ENCODE measurements at regions of chr20 and their contacts with region 1.

Region 1: GRCh38 chr20:57053798-57054552 is 212.5 kb downstream of the BMP7 start:
- DNase-seq: no peak
- H3K4me3 ChIP-seq: no peak overlapping the region
- H3K27ac ChIP-seq: no peak overlapping the region
- H3K4me1 ChIP-seq: no peaks in the 10 kb centered on the region
- H3K27me3 ChIP-seq: no peaks in the 10 kb centered on the region
- CTCF ChIP-seq: no peak
- EP300 ChIP-seq: no peak
- POLR2A ChIP-seq: no peak

Region 2: GRCh38 chr20:58192567-58192966 is 1138.6 kb after region 1 on chr20:
- intact Hi-C with region 1: loop called in 1 of 4 experiments (anchors 5 kb)
- DNase-seq: no peak
- H3K4me3 ChIP-seq: no peak overlapping the region
- H3K27ac ChIP-seq: no peak overlapping the region
- H3K4me1 ChIP-seq: no peaks in the 10 kb centered on the region
- H3K27me3 ChIP-seq: no peaks in the 10 kb centered on the region
- CTCF ChIP-seq: no peak
- EP300 ChIP-seq: no peak
- POLR2A ChIP-seq: no peak